MCF 10A (cell line): ENCODE measurements at regions of chr4 and their contacts with region 1.

Region 1: GRCh38 chr4:104531390-104531789 is 36.7 kb upstream of the CXXC4 start:
- DNase-seq: no peak
- H3K4me3 Mint-ChIP-seq: no peak overlapping the region
- H3K27ac Mint-ChIP-seq: no peak overlapping the region
- H3K4me1 Mint-ChIP-seq: no peaks in the 10 kb centered on the region
- H3K27me3 Mint-ChIP-seq: no peaks in the 10 kb centered on the region
- CTCF ChIP-seq: no peak

Region 2: GRCh38 chr4:104064646-104065577 is 466.5 kb before region 1 on chr4:
- CTCF ChIA-PET with region 1: no interaction called
- POLR2A ChIA-PET with region 1: no interaction called
- intact Hi-C with region 1: loop called (anchors 1 kb)
- DNase-seq: peak; percentile 72
- H3K4me3 Mint-ChIP-seq: no peak overlapping the region
- H3K27ac Mint-ChIP-seq: peak overlapping the region; percentile 2
- H3K4me1 Mint-ChIP-seq: no peaks in the 10 kb centered on the region
- H3K27me3 Mint-ChIP-seq: no peaks in the 10 kb centered on the region
- CTCF ChIP-seq: peak; percentile 63